Heart left ventricle (tissue), 16 donors: ENCODE measurements at regions of chr19 and their contacts with region 1.

Region 1: GRCh38 chr19:2151339-2152229 is at the start of gene AP3D1:
- DNase-seq: peak; percentile 100
- ATAC-seq: peak; percentile 97 to 99 (median 98)
- H3K4me3 ChIP-seq: peak within 1 kb of the TSS; percentile 70 to 99 (median 97)
- H3K27ac ChIP-seq: peak within 1 kb of the TSS; percentile 44 to 96 (median 89)
- H3K4me1 ChIP-seq: peaks cover 0 to 38% (median 29%) of the 10 kb centered on the region in 12 donors
- H3K27me3 ChIP-seq: no peaks in the 10 kb centered on the region
- CTCF ChIP-seq: no peak
- POLR2A ChIP-seq: peak in 1 of 2 donors; percentile 37
- total RNA-seq, gene AP3D1: 63.1 to 116 (median 103) TPM

Region 2: DNA sequence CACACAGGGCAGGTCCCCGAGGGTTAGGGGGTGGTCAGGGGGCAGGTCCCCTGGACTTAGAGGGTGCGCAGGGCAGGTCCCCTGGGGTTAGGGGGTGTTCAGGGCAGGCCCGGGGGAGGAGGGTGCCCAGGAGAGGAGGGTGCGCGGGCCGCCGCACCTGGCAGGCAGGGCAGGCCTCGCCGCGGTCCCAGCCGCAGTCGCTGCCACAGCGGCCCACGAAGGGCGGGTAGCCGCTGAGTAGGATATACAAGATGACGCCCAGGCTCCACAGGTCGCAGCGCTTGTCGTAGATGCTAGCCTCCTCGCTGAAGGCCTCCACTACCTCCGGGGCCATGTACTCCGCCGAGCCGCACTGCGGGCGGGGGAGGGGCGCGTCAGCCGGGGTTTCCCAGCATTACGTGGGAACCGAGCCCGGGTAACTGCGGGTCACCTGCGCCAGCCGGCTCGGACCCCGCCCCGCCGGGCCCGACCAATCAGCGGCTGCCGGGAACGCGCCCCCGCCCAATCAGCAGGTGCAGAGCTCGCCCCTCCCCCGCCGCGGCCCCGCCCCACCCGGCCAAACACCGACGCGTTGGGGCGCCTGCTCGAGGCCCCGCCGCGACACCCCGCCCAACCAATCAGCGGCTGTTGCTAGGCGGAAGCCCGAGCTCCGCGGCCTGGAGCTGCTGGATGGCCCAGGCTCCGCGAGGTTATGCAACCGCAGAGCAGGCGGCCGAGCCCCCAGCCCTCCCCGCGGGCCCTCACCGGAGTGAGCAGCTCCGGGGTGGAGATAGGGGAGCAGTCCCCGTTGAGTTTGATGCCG is 109.7 kb before region 1 on chr19:
- intact Hi-C with region 1: no loop called
- DNase-seq: peak; percentile 97 to 99 (median 98)
- ATAC-seq: peak; percentile 71 to 91 (median 88)
- H3K4me3 ChIP-seq: peak overlapping the region in 10 of 12 donors; percentile 30 to 56 (median 38)
- H3K27ac ChIP-seq: peak overlapping the region; percentile 71 to 99 (median 91)
- H3K4me1 ChIP-seq: peaks cover 18 to 81% (median 66%) of the 10 kb centered on the region in 12 donors
- H3K27me3 ChIP-seq: no peaks in the 10 kb centered on the region
- CTCF ChIP-seq: no peak
- POLR2A ChIP-seq: peak in 1 of 2 donors; percentile 23

Region 3: GRCh38 chr19:2096480-2097329 is 54.9 kb before region 1 on chr19 and contains the start of gene IZUMO4:
- intact Hi-C with region 1: loop called in 3 of 10 experiments (anchors 2 to 5 kb)
- DNase-seq: peak; percentile 99 to 100 (median 99)
- ATAC-seq: peak; percentile 82 to 90 (median 86)
- H3K4me3 ChIP-seq: peak within 1 kb of the TSS; percentile 32 to 94 (median 72)
- H3K27ac ChIP-seq: peak within 1 kb of the TSS; percentile 89 to 99 (median 92)
- H3K4me1 ChIP-seq: peaks cover 0 to 50% (median 28%) of the 10 kb centered on the region in 12 donors
- H3K27me3 ChIP-seq: no peaks in the 10 kb centered on the region
- CTCF ChIP-seq: peak in 10 of 12 donors; percentile 15 to 67 (median 43)
- POLR2A ChIP-seq: no peak
- total RNA-seq, gene IZUMO4: 1.7 to 6.2 (median 2.3) TPM in 8 of 9 donors, not detected in the other

Region 4: GRCh38 chr19:2207991-2208860 is 56.6 kb after region 1 on chr19:
- intact Hi-C with region 1: loop called in 3 of 10 experiments (anchors 5 to 10 kb)
- DNase-seq: peak in 4 of 5 donors; percentile 62 to 83 (median 74)
- ATAC-seq: peak; percentile 54 to 81 (median 72)
- H3K4me3 ChIP-seq: no peak overlapping the region
- H3K27ac ChIP-seq: peak overlapping the region in 6 of 12 donors; percentile 9 to 43 (median 22)
- H3K4me1 ChIP-seq: peaks cover 0 to 18% (median 12%) of the 10 kb centered on the region in 12 donors
- H3K27me3 ChIP-seq: no peaks in the 10 kb centered on the region
- CTCF ChIP-seq: peak in 8 of 12 donors; percentile 14 to 46 (median 25)
- POLR2A ChIP-seq: no peak

Region 5: GRCh38 chr19:2246801-2247361 is 95.3 kb after region 1 on chr19:
- intact Hi-C with region 1: no loop called
- DNase-seq: peak; percentile 58 to 73 (median 61)
- ATAC-seq: peak; percentile 52 to 87 (median 63)
- H3K4me3 ChIP-seq: no peak overlapping the region
- H3K27ac ChIP-seq: peak overlapping the region in 1 of 12 donors; percentile 18
- H3K4me1 ChIP-seq: peaks cover 0 to 44% (median 24%) of the 10 kb centered on the region in 12 donors
- H3K27me3 ChIP-seq: peaks cover 11 to 29% (median 22%) of the 10 kb centered on the region in 9 donors
- CTCF ChIP-seq: no peak
- POLR2A ChIP-seq: no peak

Region 6: DNA sequence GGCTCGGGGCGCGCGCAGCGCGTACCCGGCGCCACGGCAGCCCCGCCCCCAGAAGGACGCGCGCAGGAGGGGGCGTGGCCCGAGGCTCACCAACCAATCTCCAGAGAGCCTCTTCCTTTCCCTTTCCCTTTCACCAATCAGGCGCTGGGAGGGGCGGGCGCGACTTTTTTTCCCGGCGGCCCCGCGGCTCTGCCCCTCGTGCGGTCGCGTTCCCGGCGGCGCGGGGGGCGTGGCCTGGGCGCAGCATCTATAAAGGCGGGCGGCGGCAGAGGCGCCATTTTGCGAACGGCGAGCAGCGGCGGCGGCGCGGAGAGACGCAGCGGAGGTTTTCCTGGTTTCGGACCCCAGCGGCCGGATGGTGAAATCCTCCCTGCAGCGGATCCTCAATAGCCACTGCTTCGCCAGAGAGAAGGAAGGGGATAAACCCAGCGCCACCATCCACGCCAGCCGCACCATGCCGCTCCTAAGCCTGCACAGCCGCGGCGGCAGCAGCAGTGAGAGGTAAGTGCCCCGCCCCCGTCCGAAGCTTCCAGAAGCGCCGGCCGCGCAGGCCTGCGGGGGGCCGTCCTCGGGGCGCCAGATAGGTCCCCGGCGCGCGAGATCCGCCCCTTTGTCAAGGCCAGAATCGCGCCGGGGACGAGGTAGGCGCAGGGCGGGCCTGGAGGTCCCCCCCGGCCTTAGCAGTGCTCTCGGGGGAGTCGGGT is 117.8 kb after region 1 on chr19:
- intact Hi-C with region 1: loop called in 5 of 10 experiments (anchors 1 to 5 kb)
- DNase-seq: peak; percentile 98 to 100 (median 99)
- ATAC-seq: peak; percentile 89 to 92 (median 91)
- H3K4me3 ChIP-seq: peak overlapping the region; percentile 87 to 100 (median 98)
- H3K27ac ChIP-seq: peak overlapping the region; percentile 91 to 100 (median 99)
- H3K4me1 ChIP-seq: peaks cover 9 to 73% (median 42%) of the 10 kb centered on the region in 12 donors
- H3K27me3 ChIP-seq: no peaks in the 10 kb centered on the region
- CTCF ChIP-seq: no peak
- POLR2A ChIP-seq: peak; percentile 100

Region 7: DNA sequence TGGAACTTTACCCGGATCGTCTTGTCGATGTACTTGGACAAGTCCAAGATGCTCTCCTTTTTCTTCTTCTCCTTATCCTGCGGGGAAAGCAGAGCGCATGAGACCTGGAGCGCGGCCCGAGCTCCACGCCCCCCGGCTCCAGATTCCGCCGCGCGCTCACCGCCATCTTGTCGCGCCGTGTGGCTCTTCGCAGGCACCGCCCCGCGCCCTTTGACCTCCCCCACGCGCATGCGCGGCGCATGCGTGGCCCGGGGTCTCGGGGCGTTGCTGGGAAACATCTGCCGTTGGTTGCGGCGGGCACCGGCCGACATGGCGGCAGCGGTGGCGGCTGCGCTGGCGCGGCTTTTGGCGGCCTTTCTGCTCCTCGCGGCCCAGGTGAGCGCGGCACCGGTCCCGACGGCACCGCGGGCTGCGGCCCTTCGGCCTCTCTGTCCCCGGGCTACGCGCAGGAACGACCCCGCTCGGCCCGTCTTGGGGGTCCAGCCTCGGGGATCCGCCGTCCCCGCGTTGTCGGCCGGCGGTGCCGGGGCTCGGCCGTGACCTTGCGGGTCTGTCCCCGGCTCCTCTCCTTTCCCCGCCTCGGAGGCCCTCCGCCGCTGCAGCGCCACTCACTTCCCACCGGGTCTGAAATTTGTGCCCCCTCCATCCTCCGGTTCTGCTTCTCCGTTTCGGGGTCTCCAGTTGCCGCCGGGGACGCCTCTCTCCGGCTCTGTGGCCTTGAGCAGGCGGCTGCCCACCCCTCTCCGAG is 177.0 kb after region 1 on chr19 and contains the starts of genes LSM7 and SPPL2B:
- intact Hi-C with region 1: loop called in 1 of 10 experiments (anchors 5 kb)
- DNase-seq: peak; percentile 91 to 96 (median 93)
- ATAC-seq: peak; percentile 82 to 97 (median 94)
- H3K4me3 ChIP-seq: peak within 1 kb of the TSS; percentile 73 to 100 (median 98)
- H3K27ac ChIP-seq: peak within 1 kb of the TSS in 11 of 12 donors; percentile 56 to 90 (median 81)
- H3K4me1 ChIP-seq: peaks cover 5 to 63% (median 45%) of the 10 kb centered on the region in 12 donors
- H3K27me3 ChIP-seq: no peaks in the 10 kb centered on the region
- CTCF ChIP-seq: no peak
- POLR2A ChIP-seq: peak in 1 of 2 donors; percentile 89
- total RNA-seq, gene LSM7: 33.8 to 79.1 (median 41.0) TPM
- total RNA-seq, gene SPPL2B: 17.6 to 30.9 (median 21.6) TPM

Region 8: GRCh38 chr19:2610637-2611482 is 459.3 kb after region 1 on chr19:
- intact Hi-C with region 1: loop called in 1 of 10 experiments (anchors 10 kb)
- DNase-seq: peak; percentile 91 to 97 (median 94)
- ATAC-seq: peak; percentile 87 to 95 (median 92)
- H3K4me3 ChIP-seq: peak overlapping the region in 11 of 12 donors; percentile 28 to 59 (median 52)
- H3K27ac ChIP-seq: peak overlapping the region; percentile 73 to 90 (median 82)
- H3K4me1 ChIP-seq: peaks cover 0 to 32% (median 11%) of the 10 kb centered on the region in 12 donors
- H3K27me3 ChIP-seq: no peaks in the 10 kb centered on the region
- CTCF ChIP-seq: peak; percentile 96 to 100 (median 98)
- POLR2A ChIP-seq: peak in 1 of 2 donors; percentile 61